AG04450 (cell line): ENCODE measurements at regions of chr17 and their contacts with region 1.

Region 1: GRCh38 chr17:43888548-43888947 is 18.8 kb downstream of the MPP2 start:
- DNase-seq: no peak
- H3K4me3 ChIP-seq: no peak overlapping the region
- H3K27ac ChIP-seq: no peak overlapping the region
- H3K27me3 ChIP-seq: peaks cover 18% of the 10 kb centered on the region
- CTCF ChIP-seq: no peak

Region 2: GRCh38 chr17:43608313-43608712 is 280.2 kb before region 1 on chr17:
- CTCF ChIA-PET with region 1: interaction called, 10 read pairs
- POLR2A ChIA-PET with region 1: no interaction called
- DNase-seq: no peak
- H3K4me3 ChIP-seq: no peak overlapping the region
- H3K27ac ChIP-seq: no peak overlapping the region
- H3K27me3 ChIP-seq: peaks cover 4% of the 10 kb centered on the region
- CTCF ChIP-seq: no peak